Transverse colon (tissue), 4 donors: ENCODE measurements at regions of chr20 and their contacts with region 1.

Region 1: GRCh38 chr20:33663161-33664094 is 1.3 kb downstream of the C20orf144 start:
- DNase-seq: peak; percentile 89
- H3K4me3 ChIP-seq: peak overlapping the region; percentile 32 to 71 (median 52)
- H3K27ac ChIP-seq: peak overlapping the region; percentile 87 to 90 (median 89)
- H3K4me1 ChIP-seq: peaks cover 15 to 40% (median 32%) of the 10 kb centered on the region in 4 donors
- H3K27me3 ChIP-seq: no peaks in the 10 kb centered on the region
- CTCF ChIP-seq: peak in 1 of 5 experiments; percentile 22
- EP300 ChIP-seq: no peak
- POLR2A ChIP-seq: peak; percentile 70

Region 2: DNA sequence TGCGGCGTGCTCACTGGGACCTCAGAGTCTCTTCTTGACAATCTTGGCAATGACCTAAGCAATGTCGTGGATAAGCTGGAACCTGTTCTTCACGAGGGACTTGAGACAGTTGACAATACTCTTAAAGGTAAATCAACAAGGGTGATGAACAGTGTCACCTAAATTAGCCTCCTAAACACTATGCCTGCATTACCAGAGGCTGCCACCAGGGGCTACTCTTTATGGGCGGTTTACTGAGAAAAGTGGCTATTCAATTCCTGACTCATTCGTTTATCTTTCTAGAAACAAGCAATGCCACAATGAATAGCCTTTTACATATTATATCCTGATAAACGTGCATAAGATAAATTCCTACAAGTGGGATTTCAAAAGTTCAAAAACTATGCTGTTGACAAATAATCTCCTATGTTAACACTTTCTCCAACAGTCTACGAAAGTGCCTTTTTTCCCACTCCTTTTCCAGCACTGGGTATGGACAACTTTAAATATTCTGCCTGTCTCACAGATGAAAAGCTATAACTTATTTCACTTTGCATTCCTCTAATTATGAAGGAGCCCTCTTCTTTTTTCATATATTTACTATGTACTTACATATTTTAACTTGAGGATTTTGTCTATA is 494.1 kb before region 1 on chr20:
- in situ Hi-C with region 1: no loop called
- intact Hi-C with region 1: no loop called
- DNase-seq: no peak
- H3K4me3 ChIP-seq: no peak overlapping the region
- H3K27ac ChIP-seq: no peak overlapping the region
- H3K4me1 ChIP-seq: no peaks in the 10 kb centered on the region
- H3K27me3 ChIP-seq: no peaks in the 10 kb centered on the region
- CTCF ChIP-seq: peak in 2 of 5 experiments; percentile 37 to 41
- EP300 ChIP-seq: no peak
- POLR2A ChIP-seq: no peak

Region 3: DNA sequence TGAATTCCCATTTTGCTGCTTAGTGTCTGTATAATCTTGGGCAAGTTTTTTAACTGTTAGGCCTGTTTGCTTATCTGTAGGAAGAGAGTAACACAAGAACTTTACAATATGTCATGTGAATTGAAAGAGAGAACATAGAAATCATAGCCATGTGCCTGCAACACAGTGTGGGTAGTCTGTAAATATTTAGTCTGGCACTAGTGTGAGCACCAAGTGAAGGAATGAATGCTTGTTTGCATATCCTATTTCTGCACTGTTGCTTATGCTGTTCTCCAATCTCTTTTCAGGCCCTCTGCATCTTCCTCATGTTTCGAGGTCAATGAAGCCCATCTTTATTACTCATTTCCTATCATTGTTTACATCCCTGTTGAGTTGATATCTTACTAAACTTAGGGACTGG is 124.3 kb before region 1 on chr20:
- in situ Hi-C with region 1: no loop called
- intact Hi-C with region 1: no loop called
- DNase-seq: no peak
- H3K4me3 ChIP-seq: no peak overlapping the region
- H3K27ac ChIP-seq: no peak overlapping the region
- H3K4me1 ChIP-seq: peaks cover 7 to 30% (median 15%) of the 10 kb centered on the region in 4 donors
- H3K27me3 ChIP-seq: no peaks in the 10 kb centered on the region
- CTCF ChIP-seq: no peak
- EP300 ChIP-seq: no peak
- POLR2A ChIP-seq: no peak

Region 4: DNA sequence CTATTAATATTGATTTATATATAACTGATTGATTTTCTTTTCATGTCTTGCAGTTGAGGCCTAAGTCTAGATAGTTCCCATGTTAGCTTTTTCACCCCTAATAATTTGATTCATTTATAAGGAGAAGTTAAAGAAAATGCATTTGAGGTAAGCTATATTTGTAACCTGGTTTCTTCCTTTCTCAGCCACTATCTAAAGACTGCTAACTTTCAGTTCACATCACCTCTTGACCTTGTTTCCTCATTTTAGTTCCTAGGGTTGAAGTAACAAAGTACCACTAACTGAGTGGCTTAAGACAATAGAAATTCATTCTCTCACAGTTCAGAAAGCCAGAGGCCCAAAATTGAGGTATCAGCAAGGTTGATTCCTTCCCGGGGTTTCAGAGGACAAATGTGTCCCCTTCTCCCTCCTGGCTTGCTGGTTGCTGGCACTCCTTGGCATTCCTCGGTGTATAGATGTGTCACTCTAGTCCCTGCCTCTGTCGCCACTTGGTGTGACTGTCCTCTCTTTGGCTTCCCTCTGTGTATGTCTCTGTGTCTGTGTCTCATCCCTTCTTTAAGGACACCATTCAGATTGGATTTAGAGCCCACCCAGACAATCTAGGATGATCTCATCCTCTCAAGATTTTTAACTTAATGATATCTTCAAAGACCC is 57.2 kb before region 1 on chr20:
- in situ Hi-C with region 1: no loop called
- intact Hi-C with region 1: no loop called
- DNase-seq: no peak
- H3K4me3 ChIP-seq: no peak overlapping the region
- H3K27ac ChIP-seq: no peak overlapping the region
- H3K4me1 ChIP-seq: no peaks in the 10 kb centered on the region
- H3K27me3 ChIP-seq: no peaks in the 10 kb centered on the region
- CTCF ChIP-seq: no peak
- EP300 ChIP-seq: no peak
- POLR2A ChIP-seq: no peak

Region 5: DNA sequence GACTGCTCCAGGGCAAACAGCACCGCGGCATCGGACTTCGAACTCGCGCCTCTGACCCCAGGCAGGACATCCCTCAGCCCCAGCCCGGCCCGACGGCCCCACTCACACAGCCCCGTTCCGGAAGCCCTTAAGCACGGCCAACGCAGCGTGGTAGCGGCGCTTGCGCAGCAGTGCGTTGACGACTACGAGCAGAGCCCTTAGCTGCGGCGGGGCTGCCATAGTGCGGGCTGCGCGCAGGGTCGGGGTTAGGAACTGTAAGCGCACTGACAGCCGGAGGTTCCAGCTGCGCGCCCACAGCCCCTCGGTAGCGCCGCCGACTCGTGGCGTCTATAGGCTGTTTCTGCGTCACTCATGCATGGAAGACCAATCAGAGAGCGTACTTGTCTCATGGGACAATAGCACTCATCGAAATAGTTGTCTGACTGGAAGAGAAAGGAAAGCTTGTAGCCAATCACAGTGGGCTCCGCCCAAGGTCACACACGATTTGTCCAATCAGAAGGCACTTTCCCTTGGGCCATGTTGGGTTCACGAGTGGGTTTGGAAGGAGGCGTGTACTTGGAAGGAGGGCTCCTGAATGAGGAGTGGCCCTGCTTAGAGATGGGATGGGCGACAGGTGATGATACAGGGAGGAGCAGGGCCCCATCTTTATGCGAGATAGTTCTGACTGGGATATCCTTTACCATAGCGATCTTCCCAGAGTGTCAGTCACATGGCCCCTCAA is 56.7 kb after region 1 on chr20 and contains the start of gene PXMP4:
- in situ Hi-C with region 1: no loop called
- intact Hi-C with region 1: loop called (anchors 2 kb)
- DNase-seq: peak; percentile 92
- H3K4me3 ChIP-seq: peak within 1 kb of the TSS; percentile 42 to 80 (median 72)
- H3K27ac ChIP-seq: peak within 1 kb of the TSS; percentile 78 to 85 (median 81)
- H3K4me1 ChIP-seq: peaks cover 0 to 15% (median 7%) of the 10 kb centered on the region in 4 donors
- H3K27me3 ChIP-seq: no peaks in the 10 kb centered on the region
- CTCF ChIP-seq: no peak
- EP300 ChIP-seq: no peak
- POLR2A ChIP-seq: peak; percentile 67
- total RNA-seq, gene PXMP4: 1.6 to 12.0 (median 5.5) TPM